G401 (cell line): ENCODE measurements at regions of chr5 and their contacts with region 1.

Region 1: DNA sequence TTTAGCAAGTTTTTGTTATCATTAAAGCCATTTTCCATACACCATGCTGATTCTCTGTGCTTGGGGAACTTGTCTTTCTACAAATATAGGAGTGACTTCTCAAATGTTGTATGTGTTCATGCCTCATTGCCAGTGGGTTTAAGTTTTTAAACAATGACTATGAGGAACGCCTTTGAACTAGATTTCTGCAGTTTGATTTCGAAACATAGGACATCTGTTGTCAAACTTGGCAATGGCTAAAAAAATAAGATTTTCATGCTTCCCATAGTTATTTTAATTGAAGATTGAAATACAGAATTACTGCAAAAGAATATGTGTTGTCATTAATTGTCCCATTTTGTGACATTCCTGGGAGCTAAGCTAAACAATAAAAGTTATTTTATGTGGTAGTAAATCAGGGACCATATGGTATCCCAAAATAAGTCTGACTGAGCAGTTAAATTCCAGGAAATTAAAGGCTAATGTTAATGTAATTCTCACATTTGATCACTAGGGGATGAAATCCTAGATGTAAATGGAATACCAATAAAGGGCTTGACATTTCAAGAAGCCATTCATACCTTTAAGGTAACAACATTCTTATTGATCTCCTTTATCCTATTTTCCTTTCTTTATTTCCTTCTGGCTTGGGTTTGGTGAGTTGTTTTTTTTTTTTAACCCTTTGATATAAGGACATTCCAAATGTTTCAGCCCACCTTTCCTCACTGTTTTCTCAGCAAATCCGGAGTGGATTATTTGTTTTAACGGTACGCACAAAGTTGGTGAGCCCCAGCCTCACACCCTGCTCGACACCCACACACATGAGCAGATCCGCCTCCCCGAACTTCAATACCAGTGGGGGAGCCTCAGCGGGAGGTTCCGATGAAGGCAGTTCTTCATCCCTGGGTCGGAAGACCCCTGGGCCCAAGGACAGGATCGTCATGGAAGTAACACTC is 116.7 kb downstream of the GOLPH3 start:
- DNase-seq: no peak

Region 2: GRCh38 chr5:32004404-32004803 is 53.0 kb before region 1 on chr5:
- in situ Hi-C with region 1: loop called (anchors 5 kb)
- DNase-seq: no peak